Calu3 (cell line): ENCODE measurements at regions of chr13 and their contacts with region 1.

Region 1: GRCh38 chr13:59391696-59392095 is 772.0 kb downstream of the DIAPH3 start:
- DNase-seq: peak; percentile 39
- H3K4me3 Mint-ChIP-seq: no peak overlapping the region
- H3K27ac Mint-ChIP-seq: no peak overlapping the region
- H3K4me1 Mint-ChIP-seq: no peaks in the 10 kb centered on the region
- H3K27me3 Mint-ChIP-seq: no peaks in the 10 kb centered on the region
- CTCF ChIP-seq: no peak

Region 2: DNA sequence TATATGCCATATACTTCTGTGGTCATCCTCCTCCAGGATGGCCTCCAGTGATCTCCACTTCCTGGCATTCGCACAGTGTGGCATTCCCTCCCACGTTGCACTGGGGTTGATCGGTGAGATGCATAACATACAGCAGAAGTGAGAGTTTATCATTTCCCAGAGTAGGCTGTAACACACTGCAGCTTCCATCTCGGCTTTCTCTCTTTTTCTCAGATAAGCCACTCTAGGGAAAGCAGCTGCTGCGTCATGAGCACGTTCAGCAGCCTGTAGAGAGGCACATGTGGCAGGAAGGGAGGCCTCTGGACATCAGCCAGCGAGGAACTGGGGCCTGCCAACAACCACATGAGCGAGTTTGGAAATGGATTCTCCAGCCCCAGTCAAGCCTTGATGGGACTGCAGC is 35.1 kb before region 1 on chr13:
- CTCF ChIA-PET with region 1: no interaction called
- intact Hi-C with region 1: no loop called
- DNase-seq: no peak
- H3K4me3 Mint-ChIP-seq: no peak overlapping the region
- H3K27ac Mint-ChIP-seq: no peak overlapping the region
- H3K4me1 Mint-ChIP-seq: peaks cover 19% of the 10 kb centered on the region
- H3K27me3 Mint-ChIP-seq: no peaks in the 10 kb centered on the region
- CTCF ChIP-seq: no peak

Region 3: DNA sequence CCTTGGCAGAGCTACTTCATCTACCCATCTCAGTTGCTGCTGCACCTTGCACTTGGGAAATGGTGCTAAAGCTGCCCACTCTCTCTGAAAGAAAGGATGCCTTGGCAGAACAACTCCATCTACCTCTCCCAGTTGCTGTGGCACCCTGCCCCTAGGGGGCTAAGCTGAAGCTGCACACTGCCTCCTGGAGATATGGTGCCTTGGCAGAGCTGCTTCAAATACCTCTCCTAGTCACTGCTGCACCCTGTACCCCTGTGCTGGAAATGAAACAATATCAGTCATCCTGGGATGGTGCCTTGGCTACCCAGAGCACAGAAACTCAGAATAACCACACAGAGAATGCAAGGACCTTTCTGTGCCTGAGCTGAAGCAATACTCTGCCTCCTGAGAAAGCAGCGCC is 156.3 kb after region 1 on chr13:
- CTCF ChIA-PET with region 1: no interaction called
- intact Hi-C with region 1: no loop called
- DNase-seq: no peak
- H3K4me3 Mint-ChIP-seq: no peak overlapping the region
- H3K27ac Mint-ChIP-seq: no peak overlapping the region
- H3K4me1 Mint-ChIP-seq: no peaks in the 10 kb centered on the region
- H3K27me3 Mint-ChIP-seq: no peaks in the 10 kb centered on the region
- CTCF ChIP-seq: no peak

Region 4: GRCh38 chr13:59771272-59771671 is 379.6 kb after region 1 on chr13:
- CTCF ChIA-PET with region 1: no interaction called
- intact Hi-C with region 1: loop called (anchors 2 kb)
- DNase-seq: no peak
- H3K4me3 Mint-ChIP-seq: no peak overlapping the region
- H3K27ac Mint-ChIP-seq: no peak overlapping the region
- H3K4me1 Mint-ChIP-seq: no peaks in the 10 kb centered on the region
- H3K27me3 Mint-ChIP-seq: no peaks in the 10 kb centered on the region
- CTCF ChIP-seq: no peak

Region 5: GRCh38 chr13:60335531-60335930 is 943.8 kb after region 1 on chr13:
- CTCF ChIA-PET with region 1: no interaction called
- intact Hi-C with region 1: loop called (anchors 10 kb)
- DNase-seq: no peak
- H3K4me3 Mint-ChIP-seq: no peak overlapping the region
- H3K27ac Mint-ChIP-seq: no peak overlapping the region
- H3K4me1 Mint-ChIP-seq: no peaks in the 10 kb centered on the region
- H3K27me3 Mint-ChIP-seq: peaks cover 13% of the 10 kb centered on the region
- CTCF ChIP-seq: no peak